ENCODE measurements at regions of chr10 and their contacts with region 1.

Region 1: DNA sequence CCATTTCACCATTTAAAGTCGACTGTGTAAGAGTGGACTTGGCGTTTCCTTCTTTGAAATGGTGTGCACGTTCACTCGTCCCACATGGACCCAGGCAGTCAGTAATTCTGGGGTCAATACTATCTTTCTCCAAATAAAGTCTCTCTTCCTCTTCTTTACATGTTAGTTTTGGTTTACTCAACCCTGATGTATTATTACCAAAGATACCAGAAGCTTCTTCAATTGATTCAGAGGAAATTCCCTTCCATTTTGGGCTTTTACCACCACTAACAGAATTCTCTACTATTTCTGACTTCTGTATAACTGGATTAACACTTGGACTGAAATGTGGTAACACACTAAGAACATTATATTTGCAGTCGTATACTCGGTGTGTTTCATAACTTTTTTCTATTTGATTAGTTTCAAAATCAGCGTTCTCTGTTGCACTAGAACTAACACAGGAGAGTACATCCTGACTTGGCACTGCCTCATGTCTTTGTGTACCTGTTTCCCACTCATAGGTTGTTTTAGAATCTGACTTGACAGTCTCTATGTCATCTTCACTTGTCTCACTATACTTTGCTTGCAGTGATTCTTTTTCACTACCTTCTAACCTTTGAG is 60.8 kb downstream of the LARP4B start:
- DNase-seq: no peak

Region 2: DNA sequence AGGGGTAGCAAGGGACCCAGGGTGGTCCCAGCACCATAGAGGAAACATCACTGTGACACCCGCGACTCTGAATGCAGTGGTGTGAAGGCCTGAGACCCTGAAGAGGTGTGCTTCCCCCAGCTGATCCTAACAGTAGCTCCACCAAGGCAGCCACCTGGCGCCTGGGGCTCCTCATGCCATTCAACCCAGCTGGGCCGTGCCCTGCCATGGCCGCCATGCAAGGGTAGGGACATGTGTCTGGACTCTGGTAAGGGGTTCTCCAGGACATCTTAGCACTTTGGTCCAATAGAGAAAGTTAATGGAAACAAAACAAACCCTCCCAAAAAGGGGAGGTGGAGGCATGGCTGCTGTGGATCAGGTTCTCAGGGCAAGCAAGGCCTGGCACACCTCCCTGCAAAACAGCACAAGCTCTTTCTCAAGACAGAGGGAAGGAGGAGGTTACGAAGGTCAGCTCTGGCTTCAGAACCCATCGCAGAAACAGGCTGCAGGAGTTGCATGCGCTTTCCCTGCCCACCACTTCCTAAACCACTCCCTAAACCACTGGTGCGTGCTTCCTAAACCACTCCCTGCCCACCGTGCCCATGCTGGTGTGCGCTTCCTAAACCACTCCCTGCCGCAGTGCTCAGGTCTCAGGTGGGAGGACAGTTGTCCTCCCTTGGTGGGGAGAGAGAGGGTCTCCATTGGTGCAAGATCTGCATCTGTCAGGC is 47.9 kb before region 1 on chr10:
- intact Hi-C with region 1: loop called (anchors 5 kb)
- DNase-seq: no peak

Measured in cardiac septum (tissue), 1 donor.